ENCODE measurements at regions of chr12 and their contacts with region 1.

Region 1: GRCh38 chr12:55619354-55620138 is 17.1 kb upstream of the OR10P1 start:
- DNase-seq: peak; percentile 70
- CTCF ChIP-seq: peak; percentile 62

Region 2: GRCh38 chr12:55194382-55194781 is 425.2 kb before region 1 on chr12:
- in situ Hi-C with region 1: loop called (anchors 10 kb)
- DNase-seq: no peak
- CTCF ChIP-seq: no peak

Region 3: GRCh38 chr12:55407866-55408265 is 211.7 kb before region 1 on chr12:
- in situ Hi-C with region 1: no loop called
- DNase-seq: no peak
- CTCF ChIP-seq: no peak

Measured in GM13977 (cell line).